ENCODE measurements at regions of chr14 and their contacts with region 1.

Region 1: GRCh38 chr14:99982537-99983250 is 82.5 kb upstream of the EVL start:
- DNase-seq: peak; percentile 33
- ATAC-seq: peak; percentile 95
- H3K4me3 ChIP-seq: no peak overlapping the region
- H3K27ac ChIP-seq: no peak overlapping the region
- H3K4me1 ChIP-seq: no peaks in the 10 kb centered on the region
- H3K27me3 ChIP-seq: no peaks in the 10 kb centered on the region
- CTCF ChIP-seq: peak; percentile 84 to 93 (median 86)
- EP300 ChIP-seq: no peak
- POLR2A ChIP-seq: no peak
- RAD21 ChIP-seq: peak; percentile 93

Region 2: DNA sequence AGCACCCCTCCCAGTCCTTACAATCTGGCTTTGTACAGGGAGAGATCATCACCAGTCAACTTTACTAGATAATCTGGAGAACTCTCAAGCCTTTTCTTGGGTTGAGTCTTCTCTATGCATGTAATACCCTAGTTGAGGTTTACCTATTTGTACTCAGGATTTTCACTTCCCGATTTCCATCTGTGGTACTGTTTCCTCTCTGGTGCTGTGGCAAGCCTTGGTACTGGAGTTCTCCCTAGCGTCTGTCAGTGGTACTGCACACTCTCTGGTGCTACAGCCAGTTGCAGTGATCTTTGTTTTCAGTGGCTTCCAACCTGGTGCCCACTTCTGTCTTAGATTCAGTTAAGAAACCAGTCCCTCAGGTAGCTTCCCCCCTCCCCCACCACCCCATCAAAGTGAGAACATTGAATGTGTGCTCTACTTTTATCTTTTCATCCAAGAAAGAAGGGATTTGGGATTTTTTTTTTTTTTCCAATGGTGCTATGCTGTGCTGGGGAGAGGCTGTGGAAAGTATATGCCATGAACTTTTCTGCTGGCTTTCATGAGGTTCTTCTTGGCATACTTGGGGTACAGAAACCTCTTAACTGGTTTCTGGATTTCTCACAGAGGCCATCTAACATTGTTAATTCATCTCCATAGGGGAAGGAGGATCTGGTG is 13.1 kb after region 1 on chr14:
- CTCF ChIA-PET with region 1: interaction called, 27 read pairs
- POLR2A ChIA-PET with region 1: interaction called, 4 read pairs
- RAD21 ChIA-PET with region 1: interaction called, 4 read pairs
- SMC1A ChIA-PET with region 1: interaction called, 8 read pairs
- in situ Hi-C with region 1: no loop called
- intact Hi-C with region 1: no loop called
- DNase-seq: peak; percentile 89
- ATAC-seq: peak; percentile 100
- H3K4me3 ChIP-seq: no peak overlapping the region
- H3K27ac ChIP-seq: no peak overlapping the region
- H3K4me1 ChIP-seq: peaks cover 7% of the 10 kb centered on the region; the same call in 1 of the 2 replicates
- H3K27me3 ChIP-seq: no peaks in the 10 kb centered on the region; a peak in 1 of 4 replicates
- CTCF ChIP-seq: peak; percentile 91 to 97 (median 91); a peak in 5 of 6 replicates
- EP300 ChIP-seq: peak in 1 of 2 experiments; percentile 83; a peak in 2 of 4 replicates
- POLR2A ChIP-seq: no peak
- RAD21 ChIP-seq: peak; percentile 79

Region 3: GRCh38 chr14:100025111-100025510 is 42.4 kb after region 1 on chr14:
- CTCF ChIA-PET with region 1: interaction called, 100 read pairs
- POLR2A ChIA-PET with region 1: interaction called, 3 read pairs
- RAD21 ChIA-PET with region 1: interaction called, 39 read pairs
- SMC1A ChIA-PET with region 1: interaction called, 52 read pairs
- in situ Hi-C with region 1: no loop called
- intact Hi-C with region 1: loop called (anchors 1 kb)
- DNase-seq: no peak
- ATAC-seq: peak; percentile 96
- H3K4me3 ChIP-seq: no peak overlapping the region
- H3K27ac ChIP-seq: no peak overlapping the region
- H3K4me1 ChIP-seq: peaks cover 5% of the 10 kb centered on the region; the same call in 1 of the 2 replicates
- H3K27me3 ChIP-seq: no peaks in the 10 kb centered on the region
- CTCF ChIP-seq: peak; percentile 44 to 66 (median 55); a peak in 5 of 6 replicates
- EP300 ChIP-seq: no peak
- POLR2A ChIP-seq: no peak
- RAD21 ChIP-seq: peak; percentile 45; the same call in 1 of the 2 replicates

Region 4: DNA sequence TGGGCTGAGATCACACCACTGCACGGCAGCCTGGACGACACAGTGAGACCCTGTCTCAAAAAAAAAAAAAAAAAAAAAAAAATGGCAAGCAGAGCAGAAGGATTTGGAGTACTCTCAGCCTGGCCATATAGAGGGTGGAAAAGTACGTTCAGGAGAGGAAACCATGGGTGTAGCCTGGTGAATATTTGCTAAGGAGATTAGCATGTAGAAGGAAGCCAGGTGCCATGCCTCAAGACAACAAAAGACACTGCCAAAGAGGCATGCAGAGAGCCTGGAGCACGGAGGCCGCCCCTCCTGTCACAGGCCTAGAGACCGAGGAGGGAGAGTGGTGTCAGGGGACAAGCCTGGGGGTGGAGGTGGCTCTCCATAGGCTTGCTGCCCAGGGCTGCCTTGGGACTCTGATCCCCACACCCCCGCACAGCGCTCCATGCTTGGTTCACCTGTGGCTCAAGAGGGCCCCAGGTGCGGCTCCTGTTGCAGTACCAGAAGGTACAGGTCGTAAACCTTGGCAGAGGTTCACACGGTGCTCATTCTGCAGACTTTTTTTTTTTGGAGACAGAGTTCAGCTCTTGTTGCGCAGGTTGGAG is 204.6 kb after region 1 on chr14:
- CTCF ChIA-PET with region 1: interaction called, 42 read pairs
- POLR2A ChIA-PET with region 1: no interaction called
- RAD21 ChIA-PET with region 1: no interaction called
- SMC1A ChIA-PET with region 1: interaction called, 8 read pairs
- in situ Hi-C with region 1: loop called (anchors 5 kb)
- intact Hi-C with region 1: loop called (anchors 2 kb)
- DNase-seq: no peak
- ATAC-seq: no peak
- H3K4me3 ChIP-seq: no peak overlapping the region
- H3K27ac ChIP-seq: no peak overlapping the region
- H3K4me1 ChIP-seq: peaks cover 3% of the 10 kb centered on the region; the same call in 1 of the 2 replicates
- H3K27me3 ChIP-seq: no peaks in the 10 kb centered on the region
- CTCF ChIP-seq: no peak
- EP300 ChIP-seq: no peak
- POLR2A ChIP-seq: no peak
- RAD21 ChIP-seq: no peak